A549 (cell line): ENCODE measurements at regions of chr16 and their contacts with region 1.

Region 1: GRCh38 chr16:67672739-67673662 is 6.4 kb downstream of the C16orf86 start:
- DNase-seq: peak; percentile 58 to 84
- ATAC-seq: peak; percentile 57 to 65
- H3K4me3 ChIP-seq: no peak overlapping the region
- H3K27ac ChIP-seq: no peak overlapping the region
- H3K4me1 ChIP-seq: peaks cover 3% of the 10 kb centered on the region; the same call in 1 of the 3 replicates
- CTCF ChIP-seq: peak; percentile 64
- EP300 ChIP-seq: no peak
- POLR2A ChIP-seq: no peak
- RAD21 ChIP-seq: peak; percentile 73 to 83

Region 2: GRCh38 chr16:67685388-67686112 is 12.5 kb after region 1 on chr16:
- CTCF ChIA-PET with region 1: interaction called, 36 read pairs
- POLR2A ChIA-PET with region 1: no interaction called
- DNase-seq: no peak
- ATAC-seq: no peak
- H3K4me3 ChIP-seq: no peak overlapping the region
- H3K27ac ChIP-seq: no peak overlapping the region
- H3K4me1 ChIP-seq: no peaks in the 10 kb centered on the region
- CTCF ChIP-seq: no peak
- EP300 ChIP-seq: no peak
- POLR2A ChIP-seq: no peak
- RAD21 ChIP-seq: no peak